Caco-2 (cell line): ENCODE measurements at regions of chr6 and their contacts with region 1.

Region 1: DNA sequence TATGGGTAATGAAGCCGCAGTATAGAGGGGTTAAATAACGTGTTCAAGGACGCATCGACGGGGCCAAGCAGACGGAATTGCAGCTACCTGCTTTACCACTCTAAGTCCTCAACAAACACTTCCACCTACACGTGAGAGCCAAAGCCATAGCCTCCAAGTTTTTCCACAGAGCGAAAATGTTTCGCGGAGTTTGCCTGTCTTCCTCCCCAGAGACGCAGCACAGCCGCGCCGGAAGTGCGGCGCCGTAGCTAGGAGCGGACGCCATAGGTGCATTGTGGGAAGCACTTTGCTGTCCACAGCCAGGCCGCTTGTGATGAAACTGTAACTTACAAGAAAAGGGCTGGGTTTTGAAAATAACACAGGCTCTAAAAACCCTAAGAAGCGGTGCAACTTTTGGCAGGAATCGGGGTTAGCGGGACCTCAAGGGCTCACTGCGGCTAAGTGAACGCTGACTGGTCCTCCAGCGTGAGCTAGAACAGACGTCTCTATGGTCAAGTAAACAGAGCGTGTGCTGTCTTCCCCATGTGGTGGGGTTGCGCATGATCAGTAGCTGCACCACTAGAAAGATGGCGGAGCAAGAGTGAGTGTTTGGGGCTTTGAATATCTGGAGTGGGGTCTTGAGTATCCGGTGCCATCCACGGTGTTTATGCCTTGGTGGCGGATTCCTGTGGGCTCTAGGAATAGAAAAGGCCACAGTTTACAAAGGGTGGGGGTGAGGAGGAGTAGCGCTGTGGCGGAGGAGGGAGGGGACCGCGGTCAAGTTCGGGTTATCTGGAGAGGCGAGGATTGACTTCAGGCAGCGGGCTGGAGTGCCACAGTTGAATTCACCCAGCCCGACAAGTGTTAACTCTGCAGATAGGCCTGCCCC is at the start of gene RPL7L1:
- DNase-seq: peak; percentile 83 to 85
- H3K4me3 ChIP-seq: peak within 1 kb of the TSS; percentile 75
- H3K4me3 Mint-ChIP-seq: peak within 1 kb of the TSS; percentile 94
- H3K27ac Mint-ChIP-seq: peak within 1 kb of the TSS; percentile 100
- H3K4me1 ChIP-seq: no peaks in the 10 kb centered on the region
- H3K4me1 Mint-ChIP-seq: no peaks in the 10 kb centered on the region
- H3K27me3 ChIP-seq: no peaks in the 10 kb centered on the region
- H3K27me3 Mint-ChIP-seq: no peaks in the 10 kb centered on the region
- CTCF ChIP-seq: no peak
- total RNA-seq, gene RPL7L1: 103 and 110 TPM in 2 replicates

Region 2: GRCh38 chr6:42563697-42564505 is 315.7 kb before region 1 on chr6 and contains the start of gene UBR2:
- CTCF ChIA-PET with region 1: no interaction called
- POLR2A ChIA-PET with region 1: interaction called, 4 read pairs
- intact Hi-C with region 1: loop called (anchors 5 kb)
- DNase-seq: peak; percentile 96 to 98
- H3K4me3 ChIP-seq: peak within 1 kb of the TSS; percentile 84
- H3K4me3 Mint-ChIP-seq: peak within 1 kb of the TSS; percentile 98
- H3K27ac Mint-ChIP-seq: peak within 1 kb of the TSS; percentile 96
- H3K4me1 ChIP-seq: no peaks in the 10 kb centered on the region
- H3K4me1 Mint-ChIP-seq: peaks cover 16% of the 10 kb centered on the region
- H3K27me3 ChIP-seq: no peaks in the 10 kb centered on the region
- H3K27me3 Mint-ChIP-seq: no peaks in the 10 kb centered on the region
- CTCF ChIP-seq: peak; percentile 35 to 76
- total RNA-seq, gene UBR2: 21.7 TPM in 2 replicates

Region 3: GRCh38 chr6:42661540-42662153 is 218.0 kb before region 1 on chr6:
- CTCF ChIA-PET with region 1: interaction called, 6 read pairs
- POLR2A ChIA-PET with region 1: interaction called, 5 read pairs
- intact Hi-C with region 1: loop called (anchors 1 kb)
- DNase-seq: peak; percentile 65 to 78
- H3K4me3 ChIP-seq: no peak overlapping the region
- H3K4me3 Mint-ChIP-seq: no peak overlapping the region
- H3K27ac Mint-ChIP-seq: no peak overlapping the region
- H3K4me1 ChIP-seq: no peaks in the 10 kb centered on the region
- H3K4me1 Mint-ChIP-seq: no peaks in the 10 kb centered on the region
- H3K27me3 ChIP-seq: no peaks in the 10 kb centered on the region
- H3K27me3 Mint-ChIP-seq: no peaks in the 10 kb centered on the region
- CTCF ChIP-seq: peak; percentile 83 to 85

Region 4: DNA sequence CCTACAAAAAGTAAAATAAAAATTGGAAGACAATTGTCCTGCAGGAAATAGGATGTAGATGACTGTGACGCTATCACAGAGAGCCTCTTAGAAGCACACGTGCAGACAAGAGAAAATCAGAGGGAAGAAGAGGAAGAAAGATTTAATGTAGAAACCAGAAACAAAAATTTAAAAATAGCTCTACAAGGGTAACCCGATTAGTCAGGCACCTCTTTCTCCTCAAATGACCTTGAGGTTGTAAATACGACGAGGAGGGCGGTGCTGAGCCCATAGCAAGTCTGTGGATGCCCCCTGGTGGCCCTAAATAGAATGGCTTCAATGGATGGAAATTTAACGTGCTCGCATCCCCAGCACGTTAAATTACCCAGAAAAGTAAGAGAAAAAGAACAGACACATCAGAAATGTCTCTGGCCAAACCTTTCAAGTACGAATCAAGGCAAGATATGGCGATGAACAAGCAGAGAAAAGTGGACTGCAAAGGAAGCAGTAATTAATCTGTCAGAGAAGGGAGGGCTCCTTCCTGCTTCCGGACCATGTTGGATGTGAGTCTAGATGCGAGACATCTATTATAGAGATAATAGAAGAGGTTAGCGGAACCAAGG is 153.0 kb before region 1 on chr6:
- CTCF ChIA-PET with region 1: no interaction called
- POLR2A ChIA-PET with region 1: no interaction called
- intact Hi-C with region 1: loop called (anchors 1 kb)
- DNase-seq: peak; percentile 69 to 71
- H3K4me3 ChIP-seq: peak overlapping the region; percentile 30
- H3K4me3 Mint-ChIP-seq: peak overlapping the region; percentile 69
- H3K27ac Mint-ChIP-seq: no peak overlapping the region
- H3K4me1 ChIP-seq: peaks cover 4% of the 10 kb centered on the region; the same call in 1 of the 2 replicates
- H3K4me1 Mint-ChIP-seq: peaks cover 12% of the 10 kb centered on the region
- H3K27me3 ChIP-seq: no peaks in the 10 kb centered on the region
- H3K27me3 Mint-ChIP-seq: no peaks in the 10 kb centered on the region
- CTCF ChIP-seq: peak; percentile 77 to 79

Region 5: DNA sequence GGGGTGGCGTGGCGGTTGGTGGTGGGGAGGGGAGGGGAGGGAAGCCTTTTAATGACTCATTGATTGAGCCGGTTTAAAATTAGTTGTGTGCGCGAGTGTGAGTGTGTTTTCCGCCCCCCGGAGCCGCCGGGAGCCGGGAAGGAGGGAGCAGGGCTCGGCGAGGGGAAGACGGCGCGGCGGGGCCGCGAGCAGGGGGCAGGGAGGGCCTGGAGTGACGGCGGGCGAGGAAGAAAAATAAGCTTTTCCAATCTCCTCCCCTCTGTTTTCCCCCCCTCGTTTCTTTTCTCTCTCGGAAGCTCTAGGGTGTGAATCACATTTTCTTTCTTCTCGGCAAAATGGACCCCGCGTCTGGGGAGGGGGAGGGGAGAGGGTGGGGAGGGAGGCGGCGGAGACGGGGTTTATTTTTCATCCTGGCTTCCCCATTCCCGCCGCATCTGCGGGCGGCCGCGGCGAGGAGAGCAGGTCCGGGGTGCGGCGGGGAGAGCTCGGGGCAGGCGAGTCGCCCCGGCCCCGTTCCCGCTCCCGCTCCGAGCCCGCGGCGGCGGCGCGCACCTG is 96.9 kb before region 1 on chr6:
- CTCF ChIA-PET with region 1: no interaction called
- POLR2A ChIA-PET with region 1: interaction called, 26 read pairs
- intact Hi-C with region 1: loop called (anchors 1 kb)
- DNase-seq: peak; percentile 73 to 80
- H3K4me3 ChIP-seq: peak overlapping the region; percentile 88
- H3K4me3 Mint-ChIP-seq: peak overlapping the region; percentile 94
- H3K27ac Mint-ChIP-seq: peak overlapping the region; percentile 99
- H3K4me1 ChIP-seq: peaks cover 31% of the 10 kb centered on the region
- H3K4me1 Mint-ChIP-seq: no peaks in the 10 kb centered on the region
- H3K27me3 ChIP-seq: no peaks in the 10 kb centered on the region
- H3K27me3 Mint-ChIP-seq: no peaks in the 10 kb centered on the region
- CTCF ChIP-seq: no peak

Region 6: GRCh38 chr6:42890311-42891198 is 10.9 kb after region 1 on chr6:
- CTCF ChIA-PET with region 1: interaction called, 9 read pairs
- POLR2A ChIA-PET with region 1: interaction called, 13 read pairs
- intact Hi-C with region 1: loop called (anchors 1 kb)
- DNase-seq: peak; percentile 95 to 96
- H3K4me3 ChIP-seq: peak overlapping the region; percentile 73
- H3K4me3 Mint-ChIP-seq: peak overlapping the region; percentile 94
- H3K27ac Mint-ChIP-seq: peak overlapping the region; percentile 89
- H3K4me1 ChIP-seq: 0 out of 2 replicates have a peak, but pooled peaks cover 5% of the 10 kb centered on the region
- H3K4me1 Mint-ChIP-seq: peaks cover 15% of the 10 kb centered on the region
- H3K27me3 ChIP-seq: no peaks in the 10 kb centered on the region
- H3K27me3 Mint-ChIP-seq: no peaks in the 10 kb centered on the region
- CTCF ChIP-seq: no peak